Activated B cell treated with CpG ODN at 0.5 μM for 24 hours (primary cell): ENCODE measurements at regions of chr3 and their contacts with region 1.

Region 1: GRCh38 chr3:114043205-114043604 is 13.1 kb downstream of the CCDC191 start:
- DNase-seq: no peak
- ATAC-seq: peak; percentile 52
- H3K4me3 Mint-ChIP-seq: no peak overlapping the region
- H3K27ac Mint-ChIP-seq: no peak overlapping the region
- H3K4me1 Mint-ChIP-seq: peaks cover 4% of the 10 kb centered on the region
- H3K27me3 Mint-ChIP-seq: no peaks in the 10 kb centered on the region
- CTCF ChIP-seq: no peak

Region 2: DNA sequence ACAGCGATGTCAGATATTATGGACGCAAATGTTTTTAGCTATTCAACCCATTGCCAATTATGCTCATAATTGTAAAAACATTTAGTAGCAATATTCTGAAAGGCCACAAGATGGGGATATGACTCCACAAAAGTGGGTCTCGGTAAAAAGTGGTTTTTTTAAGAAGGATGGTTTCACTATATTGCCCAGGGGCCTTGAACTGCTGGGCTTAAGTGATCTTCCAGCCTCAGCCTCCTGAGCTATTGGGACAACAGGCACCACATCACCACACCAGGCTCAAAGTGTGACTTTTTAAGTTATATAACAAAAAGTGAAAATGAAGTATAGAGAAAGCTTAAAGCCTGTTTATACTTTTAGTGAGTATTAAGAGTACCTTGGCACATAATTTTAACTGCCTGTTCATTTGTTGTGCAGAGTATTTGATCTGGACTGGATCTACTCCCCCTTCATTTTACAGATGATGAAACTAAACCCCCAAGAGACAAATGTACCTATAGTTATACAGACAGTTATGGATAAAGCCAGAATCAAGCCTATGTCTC is 306.6 kb before region 1 on chr3:
- CTCF ChIA-PET with region 1: no interaction called
- POLR2A ChIA-PET with region 1: no interaction called
- intact Hi-C with region 1: loop called (anchors 1 kb)
- DNase-seq: no peak
- ATAC-seq: peak; percentile 86
- H3K4me3 Mint-ChIP-seq: no peak overlapping the region
- H3K27ac Mint-ChIP-seq: peak overlapping the region; percentile 76
- H3K4me1 Mint-ChIP-seq: peaks cover 40% of the 10 kb centered on the region
- H3K27me3 Mint-ChIP-seq: no peaks in the 10 kb centered on the region
- CTCF ChIP-seq: no peak

Region 3: GRCh38 chr3:113844622-113845222 is 198.5 kb before region 1 on chr3:
- CTCF ChIA-PET with region 1: interaction called, 5 read pairs
- POLR2A ChIA-PET with region 1: no interaction called
- intact Hi-C with region 1: loop called (anchors 2 kb)
- DNase-seq: no peak
- ATAC-seq: peak; percentile 61
- H3K4me3 Mint-ChIP-seq: no peak overlapping the region
- H3K27ac Mint-ChIP-seq: no peak overlapping the region
- H3K4me1 Mint-ChIP-seq: peaks cover 3% of the 10 kb centered on the region
- H3K27me3 Mint-ChIP-seq: no peaks in the 10 kb centered on the region
- CTCF ChIP-seq: no peak

Region 4: DNA sequence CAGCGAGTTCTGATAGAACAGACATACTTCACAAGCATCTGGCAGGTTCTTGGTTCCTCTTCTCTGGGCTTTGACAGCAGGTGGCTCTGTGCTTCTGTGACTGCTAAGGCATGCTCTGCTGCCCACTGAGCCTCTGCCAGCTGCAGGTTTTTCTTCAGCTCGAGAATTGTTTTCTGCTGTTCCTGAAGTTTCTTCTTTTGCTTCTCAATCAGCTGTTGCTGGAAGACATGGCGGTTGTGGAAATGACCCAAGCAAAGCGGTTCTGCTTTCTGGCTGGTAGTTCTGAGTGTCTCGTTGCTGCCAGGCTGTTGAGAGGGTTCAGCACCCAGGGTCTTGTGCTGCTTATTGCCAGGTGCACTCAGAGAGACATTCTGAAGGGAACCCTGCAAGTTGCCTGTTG is 37.7 kb before region 1 on chr3:
- CTCF ChIA-PET with region 1: interaction called, 6 read pairs
- POLR2A ChIA-PET with region 1: no interaction called
- intact Hi-C with region 1: loop called (anchors 2 kb)
- DNase-seq: peak; percentile 52
- ATAC-seq: peak; percentile 95
- H3K4me3 Mint-ChIP-seq: peak overlapping the region; percentile 76
- H3K27ac Mint-ChIP-seq: peak overlapping the region; percentile 97
- H3K4me1 Mint-ChIP-seq: peaks cover 61% of the 10 kb centered on the region
- H3K27me3 Mint-ChIP-seq: no peaks in the 10 kb centered on the region
- CTCF ChIP-seq: no peak